Heart left ventricle (tissue), 16 donors: ENCODE measurements at regions of chr2 and their contacts with region 1.

Region 1: GRCh38 chr2:202870431-202871299 is 901 bp downstream of the ICA1L start:
- DNase-seq: peak; percentile 49 to 70 (median 50)
- ATAC-seq: peak; percentile 53 to 90 (median 78)
- H3K4me3 ChIP-seq: peak overlapping the region; percentile 69 to 92 (median 84)
- H3K27ac ChIP-seq: peak overlapping the region; percentile 7 to 87 (median 76)
- H3K4me1 ChIP-seq: peaks cover 0 to 13% (median 5%) of the 10 kb centered on the region in 12 donors
- H3K27me3 ChIP-seq: no peaks in the 10 kb centered on the region
- CTCF ChIP-seq: peak in 11 of 12 donors; percentile 9 to 54 (median 31)
- POLR2A ChIP-seq: no peak

Region 2: GRCh38 chr2:202289394-202290204 is 581.1 kb before region 1 on chr2:
- intact Hi-C with region 1: loop called in 1 of 10 experiments (anchors 10 kb)
- DNase-seq: no peak
- ATAC-seq: no peak
- H3K4me3 ChIP-seq: no peak overlapping the region
- H3K27ac ChIP-seq: no peak overlapping the region
- H3K4me1 ChIP-seq: no peaks in the 10 kb centered on the region
- H3K27me3 ChIP-seq: no peaks in the 10 kb centered on the region
- CTCF ChIP-seq: no peak
- POLR2A ChIP-seq: no peak

Region 3: GRCh38 chr2:202577250-202578183 is 293.1 kb before region 1 on chr2:
- intact Hi-C with region 1: loop called in 3 of 10 experiments (anchors 5 to 10 kb)
- DNase-seq: no peak
- ATAC-seq: no peak
- H3K4me3 ChIP-seq: no peak overlapping the region
- H3K27ac ChIP-seq: no peak overlapping the region
- H3K4me1 ChIP-seq: no peaks in the 10 kb centered on the region
- H3K27me3 ChIP-seq: no peaks in the 10 kb centered on the region
- CTCF ChIP-seq: no peak
- POLR2A ChIP-seq: no peak

Region 4: DNA sequence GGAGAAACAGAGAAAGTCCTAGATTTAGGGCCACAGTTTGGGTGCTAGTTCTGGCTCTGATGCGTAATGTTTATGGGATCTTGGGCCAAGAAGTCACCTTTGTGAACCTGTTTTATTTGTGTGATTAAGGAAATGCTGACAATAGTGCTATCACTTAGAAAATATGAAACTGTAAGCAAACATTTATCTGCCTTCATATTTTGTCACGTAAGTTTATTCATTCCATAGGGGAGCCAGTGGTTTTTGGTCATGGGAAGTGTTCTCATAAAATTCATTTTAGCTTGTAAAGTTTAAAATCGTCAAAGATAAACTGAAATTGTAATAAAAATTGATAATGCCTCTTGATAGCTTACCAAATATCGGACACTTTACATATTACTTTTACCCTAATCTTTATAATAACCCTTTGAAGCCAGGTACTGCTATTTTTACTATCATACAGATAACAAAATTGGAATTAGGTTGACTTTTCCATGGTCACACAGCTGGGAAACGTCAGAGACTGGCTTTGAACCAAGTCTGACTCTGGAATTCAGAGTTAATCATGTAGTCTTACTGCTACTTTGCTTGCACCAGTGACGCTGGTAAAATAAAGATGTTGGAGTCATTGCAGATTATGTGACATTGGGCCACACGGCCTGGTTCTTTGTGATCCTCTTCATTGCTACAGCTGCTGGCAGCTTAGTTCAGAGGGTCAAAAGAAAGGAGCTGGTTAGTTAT is 98.8 kb before region 1 on chr2:
- intact Hi-C with region 1: loop called in 1 of 10 experiments (anchors 10 kb)
- DNase-seq: peak in 3 of 5 donors; percentile 11 to 48 (median 27)
- ATAC-seq: peak in 3 of 4 donors; percentile 44 to 71 (median 60)
- H3K4me3 ChIP-seq: no peak overlapping the region
- H3K27ac ChIP-seq: no peak overlapping the region
- H3K4me1 ChIP-seq: peaks cover 0 to 11% (median 0%) of the 10 kb centered on the region in 12 donors
- H3K27me3 ChIP-seq: no peaks in the 10 kb centered on the region
- CTCF ChIP-seq: no peak
- POLR2A ChIP-seq: no peak

Region 5: DNA sequence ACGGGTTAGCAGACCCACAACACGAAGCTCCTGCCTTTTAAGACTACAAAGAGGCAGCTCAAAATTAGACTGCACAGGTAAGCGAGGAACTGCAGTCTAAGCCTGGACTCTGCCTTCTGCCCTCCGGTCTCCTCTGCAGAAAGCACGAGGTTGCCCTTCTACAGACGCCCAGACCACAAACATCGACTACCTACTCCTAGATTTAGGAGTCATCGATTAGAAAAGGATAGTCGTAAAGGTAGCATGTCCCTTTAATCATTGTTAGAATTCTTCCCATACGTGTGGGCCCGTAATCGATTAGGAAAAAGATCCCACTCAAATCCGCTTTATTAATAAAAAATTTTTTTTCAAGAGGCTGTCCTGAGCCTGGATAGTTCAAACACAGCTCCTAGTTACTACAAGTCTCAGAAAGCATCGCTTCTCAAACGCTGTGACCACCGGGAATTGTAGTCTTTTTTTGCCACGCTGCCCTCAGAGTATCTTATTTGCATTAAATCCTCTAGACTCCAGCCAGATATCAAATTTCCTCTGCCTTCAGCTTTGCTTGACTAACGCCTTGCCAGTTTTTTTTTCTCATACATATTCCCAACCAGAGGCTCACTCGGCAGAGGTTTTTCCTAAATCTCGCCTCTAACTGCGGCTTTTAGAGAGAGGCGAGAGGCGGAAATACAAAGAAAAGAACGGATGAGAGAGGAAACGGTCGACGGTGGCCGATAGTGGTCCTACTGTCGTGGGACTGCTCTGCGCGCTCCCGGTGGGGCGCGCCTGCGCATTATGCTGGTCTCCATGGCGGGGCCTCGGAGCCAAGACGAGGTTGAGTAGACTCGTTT is 41.1 kb after region 1 on chr2 and contains the starts of genes CARF and WDR12:
- intact Hi-C with region 1: loop called in 1 of 10 experiments (anchors 5 kb)
- DNase-seq: peak; percentile 94 to 96 (median 94)
- ATAC-seq: peak; percentile 97 to 98 (median 98)
- H3K4me3 ChIP-seq: peak within 1 kb of the TSS; percentile 61 to 85 (median 70)
- H3K27ac ChIP-seq: peak within 1 kb of the TSS; percentile 71 to 98 (median 86)
- H3K4me1 ChIP-seq: peaks cover 0 to 29% (median 17%) of the 10 kb centered on the region in 12 donors
- H3K27me3 ChIP-seq: no peaks in the 10 kb centered on the region
- CTCF ChIP-seq: no peak
- POLR2A ChIP-seq: peak in 1 of 2 donors; percentile 55
- total RNA-seq, gene CARF: 2.2 to 12.2 (median 7.4) TPM
- total RNA-seq, gene WDR12: 12.9 to 56.3 (median 42.3) TPM